IMR-90 (cell line): ENCODE measurements at regions of chr5 and their contacts with region 1.

Region 1: DNA sequence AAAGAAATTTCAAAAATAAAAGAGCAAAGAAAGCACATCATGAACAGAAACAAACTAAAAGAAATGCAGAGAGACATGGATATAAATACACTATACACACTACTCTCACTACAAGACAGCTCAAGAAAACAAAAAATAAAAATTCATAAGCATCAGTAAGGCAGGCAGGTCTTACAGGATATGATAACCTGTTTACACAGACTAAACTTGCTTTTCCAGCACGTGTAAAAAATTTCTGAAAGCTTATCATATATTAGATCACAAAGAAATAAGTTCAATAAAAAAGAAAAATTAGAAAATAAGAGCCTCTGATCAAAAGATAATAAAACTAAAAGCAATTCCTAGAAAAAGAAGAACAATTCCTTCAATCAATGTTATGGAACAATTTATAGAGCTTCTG is 69.9 kb downstream of the FBXW11 start:
- DNase-seq: no peak
- ATAC-seq: no peak
- H3K4me3 ChIP-seq: no peak overlapping the region
- H3K27ac ChIP-seq: no peak overlapping the region
- H3K4me1 ChIP-seq: peaks cover 2% of the 10 kb centered on the region; the same call in 1 of the 2 replicates
- H3K27me3 ChIP-seq: no peaks in the 10 kb centered on the region
- CTCF ChIP-seq: no peak
- POLR2A ChIP-seq: no peak
- RAD21 ChIP-seq: no peak

Region 2: DNA sequence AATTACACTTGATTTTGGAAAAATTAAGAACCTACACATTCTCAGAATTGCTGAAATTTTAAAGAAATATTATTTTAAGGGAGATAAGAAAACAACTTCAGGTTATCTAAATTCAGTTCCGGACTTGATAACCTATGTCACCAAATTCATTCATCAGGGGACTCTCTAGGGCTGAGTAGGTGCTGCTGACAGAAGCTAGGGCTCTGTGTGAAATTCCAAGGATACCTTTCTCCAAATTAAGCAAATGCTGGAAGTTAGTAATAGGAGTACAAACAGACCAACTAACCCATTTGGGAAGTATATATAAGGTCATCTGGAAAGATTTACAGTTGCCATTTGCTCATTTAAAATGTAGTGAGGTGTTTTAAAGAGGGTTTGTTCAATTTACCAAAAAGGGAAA is 66.6 kb before region 1 on chr5:
- CTCF ChIA-PET with region 1: no interaction called
- POLR2A ChIA-PET with region 1: interaction called, 11 read pairs
- dilution Hi-C with region 1: no loop called
- in situ Hi-C with region 1: no loop called
- intact Hi-C with region 1: no loop called
- DNase-seq: no peak
- ATAC-seq: no peak
- H3K4me3 ChIP-seq: no peak overlapping the region
- H3K27ac ChIP-seq: no peak overlapping the region
- H3K4me1 ChIP-seq: peaks cover 19% of the 10 kb centered on the region
- H3K27me3 ChIP-seq: no peaks in the 10 kb centered on the region
- CTCF ChIP-seq: no peak
- POLR2A ChIP-seq: no peak
- RAD21 ChIP-seq: no peak

Region 3: DNA sequence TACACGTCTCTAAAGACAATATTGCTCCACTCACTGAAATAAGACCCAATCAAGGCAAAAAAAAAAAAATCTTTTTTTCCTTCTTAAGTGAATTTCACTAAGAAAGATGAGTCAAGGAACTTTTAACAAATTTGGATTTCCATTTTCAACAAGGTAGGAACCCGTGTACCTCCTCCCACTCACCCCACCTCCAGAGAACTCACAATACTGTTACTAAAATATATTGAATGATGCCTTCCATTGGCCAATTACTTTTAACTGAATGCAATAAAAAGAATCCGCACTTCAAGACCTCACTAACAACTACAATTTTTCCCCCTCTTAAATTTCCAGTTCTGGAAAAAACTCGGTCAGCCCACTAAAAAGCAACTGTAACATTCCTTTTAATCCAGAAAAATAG is 19.2 kb after region 1 on chr5:
- CTCF ChIA-PET with region 1: no interaction called
- POLR2A ChIA-PET with region 1: no interaction called
- dilution Hi-C with region 1: no loop called
- in situ Hi-C with region 1: no loop called
- intact Hi-C with region 1: no loop called
- DNase-seq: no peak
- ATAC-seq: no peak
- H3K4me3 ChIP-seq: no peak overlapping the region
- H3K27ac ChIP-seq: no peak overlapping the region
- H3K4me1 ChIP-seq: peaks cover 22% of the 10 kb centered on the region
- H3K27me3 ChIP-seq: no peaks in the 10 kb centered on the region
- CTCF ChIP-seq: no peak
- POLR2A ChIP-seq: no peak
- RAD21 ChIP-seq: no peak